Caco-2 (cell line): ENCODE measurements at regions of chr10 and their contacts with region 1.

Region 1: GRCh38 chr10:99711129-99711719 is 20.7 kb downstream of the COX15 start:
- DNase-seq: peak in 1 of 2 experiments; percentile 65
- H3K4me3 ChIP-seq: no peak overlapping the region
- H3K4me3 Mint-ChIP-seq: no peak overlapping the region
- H3K27ac Mint-ChIP-seq: no peak overlapping the region
- H3K4me1 ChIP-seq: no peaks in the 10 kb centered on the region
- H3K4me1 Mint-ChIP-seq: peaks cover 8% of the 10 kb centered on the region
- H3K27me3 ChIP-seq: no peaks in the 10 kb centered on the region
- H3K27me3 Mint-ChIP-seq: no peaks in the 10 kb centered on the region
- CTCF ChIP-seq: peak; percentile 41 to 73

Region 2: DNA sequence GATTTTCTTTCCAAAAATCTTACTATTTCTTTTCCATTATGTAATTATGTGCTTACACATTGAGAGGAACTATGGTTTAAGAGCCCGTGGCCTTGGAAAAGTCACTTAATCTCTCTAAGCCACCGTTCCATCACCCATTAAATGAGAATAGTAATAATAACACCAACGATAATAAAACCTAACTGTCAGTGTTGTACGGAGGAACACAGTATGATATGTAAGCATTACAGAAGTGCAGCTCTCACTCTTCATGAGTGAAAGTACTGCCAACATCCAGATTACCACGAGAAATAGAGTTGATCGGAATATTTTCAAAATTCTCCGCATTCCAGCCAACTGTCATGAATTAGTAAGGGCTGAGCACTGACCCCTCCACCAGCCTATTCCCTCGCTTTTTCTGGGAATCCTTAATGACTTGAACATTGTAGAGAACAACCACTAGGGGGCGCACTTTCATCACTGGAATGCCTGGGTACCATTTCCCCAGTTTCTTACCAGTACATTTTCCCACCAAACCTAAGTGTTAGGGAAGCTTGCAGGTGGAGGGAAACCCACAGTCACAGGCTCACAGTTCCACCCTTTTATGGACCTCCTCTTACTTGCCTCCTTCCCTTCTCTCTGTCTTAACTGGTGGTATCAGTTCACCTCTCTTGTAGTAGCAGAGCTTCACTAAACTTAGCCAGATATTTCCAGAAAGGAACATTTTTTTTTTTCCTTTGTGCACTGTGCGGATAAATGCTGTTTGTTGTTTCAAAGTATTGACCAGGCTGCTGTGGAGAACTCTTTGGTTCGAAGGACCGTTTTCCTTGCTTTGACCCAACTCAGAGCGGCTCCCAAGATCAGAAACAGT is 150.7 kb before region 1 on chr10:
- CTCF ChIA-PET with region 1: no interaction called
- POLR2A ChIA-PET with region 1: no interaction called
- intact Hi-C with region 1: loop called (anchors 1 kb)
- DNase-seq: peak; percentile 70 to 80
- H3K4me3 ChIP-seq: no peak overlapping the region
- H3K4me3 Mint-ChIP-seq: no peak overlapping the region
- H3K27ac Mint-ChIP-seq: no peak overlapping the region
- H3K4me1 ChIP-seq: peaks cover 7% of the 10 kb centered on the region; the same call in 1 of the 2 replicates
- H3K4me1 Mint-ChIP-seq: no peaks in the 10 kb centered on the region
- H3K27me3 ChIP-seq: no peaks in the 10 kb centered on the region
- H3K27me3 Mint-ChIP-seq: no peaks in the 10 kb centered on the region
- CTCF ChIP-seq: peak; percentile 81 to 87

Region 3: GRCh38 chr10:99682752-99683151 is 28.5 kb before region 1 on chr10:
- CTCF ChIA-PET with region 1: no interaction called
- POLR2A ChIA-PET with region 1: no interaction called
- intact Hi-C with region 1: loop called (anchors 1 kb)
- DNase-seq: peak in 1 of 2 experiments; percentile 38
- H3K4me3 ChIP-seq: no peak overlapping the region
- H3K4me3 Mint-ChIP-seq: no peak overlapping the region
- H3K27ac Mint-ChIP-seq: no peak overlapping the region
- H3K4me1 ChIP-seq: no peaks in the 10 kb centered on the region; the same call in 1 of the 2 replicates
- H3K4me1 Mint-ChIP-seq: peaks cover 6% of the 10 kb centered on the region
- H3K27me3 ChIP-seq: no peaks in the 10 kb centered on the region
- H3K27me3 Mint-ChIP-seq: no peaks in the 10 kb centered on the region
- CTCF ChIP-seq: peak; percentile 51 to 52

Region 4: DNA sequence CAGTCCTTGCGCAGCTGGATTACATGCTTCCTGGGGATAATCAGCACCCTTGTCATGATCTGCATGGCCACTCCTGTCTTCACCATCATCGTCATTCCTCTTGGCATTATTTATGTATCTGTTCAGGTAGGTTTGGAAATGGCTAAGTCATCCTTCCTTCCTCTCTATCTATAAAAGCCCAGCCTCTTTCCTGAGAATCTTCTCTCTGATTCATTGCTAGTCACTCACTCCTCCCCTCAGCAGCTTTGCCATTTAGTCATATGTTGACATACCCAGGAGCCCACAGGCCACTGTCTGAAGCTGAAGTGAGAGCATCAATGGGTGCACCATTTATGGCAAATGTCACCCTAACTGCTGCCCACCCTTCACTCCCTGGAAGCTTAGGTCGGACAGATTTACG is 123.2 kb after region 1 on chr10:
- CTCF ChIA-PET with region 1: no interaction called
- POLR2A ChIA-PET with region 1: no interaction called
- intact Hi-C with region 1: no loop called
- DNase-seq: no peak
- H3K4me3 ChIP-seq: no peak overlapping the region
- H3K4me3 Mint-ChIP-seq: no peak overlapping the region
- H3K27ac Mint-ChIP-seq: no peak overlapping the region
- H3K4me1 ChIP-seq: no peaks in the 10 kb centered on the region
- H3K4me1 Mint-ChIP-seq: no peaks in the 10 kb centered on the region
- H3K27me3 ChIP-seq: no peaks in the 10 kb centered on the region
- H3K27me3 Mint-ChIP-seq: no peaks in the 10 kb centered on the region
- CTCF ChIP-seq: no peak

Region 5: GRCh38 chr10:100072514-100072913 is 361.3 kb after region 1 on chr10:
- CTCF ChIA-PET with region 1: no interaction called
- POLR2A ChIA-PET with region 1: no interaction called
- intact Hi-C with region 1: no loop called
- DNase-seq: peak in 1 of 2 experiments; percentile 25
- H3K4me3 ChIP-seq: no peak overlapping the region
- H3K4me3 Mint-ChIP-seq: no peak overlapping the region
- H3K27ac Mint-ChIP-seq: no peak overlapping the region
- H3K4me1 ChIP-seq: peaks cover 8% of the 10 kb centered on the region; the same call in 1 of the 2 replicates
- H3K4me1 Mint-ChIP-seq: peaks cover 11% of the 10 kb centered on the region
- H3K27me3 ChIP-seq: no peaks in the 10 kb centered on the region
- H3K27me3 Mint-ChIP-seq: no peaks in the 10 kb centered on the region
- CTCF ChIP-seq: no peak